ENCODE measurements at regions of chr11 and their contacts with region 1.

Region 1: GRCh38 chr11:123062158-123062891 is 389 bp upstream of the HSPA8 start:
- DNase-seq: peak; percentile 99
- H3K4me3 Mint-ChIP-seq: peak overlapping the region; percentile 90
- H3K27ac Mint-ChIP-seq: peak overlapping the region; percentile 99
- H3K4me1 Mint-ChIP-seq: peaks cover 46% of the 10 kb centered on the region
- H3K27me3 Mint-ChIP-seq: no peaks in the 10 kb centered on the region

Region 2: GRCh38 chr11:122743949-122744348 is 318.4 kb before region 1 on chr11:
- CTCF ChIA-PET with region 1: no interaction called
- POLR2A ChIA-PET with region 1: interaction called, 11 read pairs
- DNase-seq: peak; percentile 82
- H3K4me3 Mint-ChIP-seq: no peak overlapping the region
- H3K27ac Mint-ChIP-seq: no peak overlapping the region
- H3K4me1 Mint-ChIP-seq: peaks cover 1% of the 10 kb centered on the region
- H3K27me3 Mint-ChIP-seq: peaks cover 3% of the 10 kb centered on the region

Region 3: GRCh38 chr11:122951211-122951610 is 111.1 kb before region 1 on chr11:
- CTCF ChIA-PET with region 1: no interaction called
- POLR2A ChIA-PET with region 1: no interaction called
- DNase-seq: no peak
- H3K4me3 Mint-ChIP-seq: no peak overlapping the region
- H3K27ac Mint-ChIP-seq: no peak overlapping the region
- H3K4me1 Mint-ChIP-seq: peaks cover 3% of the 10 kb centered on the region
- H3K27me3 Mint-ChIP-seq: no peaks in the 10 kb centered on the region

Region 4: GRCh38 chr11:123083623-123084029 is 21.3 kb after region 1 on chr11:
- CTCF ChIA-PET with region 1: interaction called, 13 read pairs
- POLR2A ChIA-PET with region 1: interaction called, 391 read pairs
- DNase-seq: peak; percentile 82
- H3K4me3 Mint-ChIP-seq: peak overlapping the region; percentile 59
- H3K27ac Mint-ChIP-seq: peak overlapping the region; percentile 76
- H3K4me1 Mint-ChIP-seq: peaks cover 57% of the 10 kb centered on the region
- H3K27me3 Mint-ChIP-seq: no peaks in the 10 kb centered on the region

Region 5: GRCh38 chr11:123091506-123091905 is 29.2 kb after region 1 on chr11:
- CTCF ChIA-PET with region 1: interaction called, 13 read pairs
- POLR2A ChIA-PET with region 1: interaction called, 391 read pairs
- DNase-seq: no peak
- H3K4me3 Mint-ChIP-seq: no peak overlapping the region
- H3K27ac Mint-ChIP-seq: no peak overlapping the region
- H3K4me1 Mint-ChIP-seq: peaks cover 23% of the 10 kb centered on the region
- H3K27me3 Mint-ChIP-seq: no peaks in the 10 kb centered on the region

Measured in activated CD4-positive, alpha-beta memory T cell treated with anti-CD3 and anti-CD28 coated beads, Interleukin-2, amount 10 ng/mL, durations not matched to agents 7 days and 5 days (primary cell).